Right lobe of liver (tissue), 6 donors: ENCODE measurements at regions of chr6 and their contacts with region 1.

Region 1: DNA sequence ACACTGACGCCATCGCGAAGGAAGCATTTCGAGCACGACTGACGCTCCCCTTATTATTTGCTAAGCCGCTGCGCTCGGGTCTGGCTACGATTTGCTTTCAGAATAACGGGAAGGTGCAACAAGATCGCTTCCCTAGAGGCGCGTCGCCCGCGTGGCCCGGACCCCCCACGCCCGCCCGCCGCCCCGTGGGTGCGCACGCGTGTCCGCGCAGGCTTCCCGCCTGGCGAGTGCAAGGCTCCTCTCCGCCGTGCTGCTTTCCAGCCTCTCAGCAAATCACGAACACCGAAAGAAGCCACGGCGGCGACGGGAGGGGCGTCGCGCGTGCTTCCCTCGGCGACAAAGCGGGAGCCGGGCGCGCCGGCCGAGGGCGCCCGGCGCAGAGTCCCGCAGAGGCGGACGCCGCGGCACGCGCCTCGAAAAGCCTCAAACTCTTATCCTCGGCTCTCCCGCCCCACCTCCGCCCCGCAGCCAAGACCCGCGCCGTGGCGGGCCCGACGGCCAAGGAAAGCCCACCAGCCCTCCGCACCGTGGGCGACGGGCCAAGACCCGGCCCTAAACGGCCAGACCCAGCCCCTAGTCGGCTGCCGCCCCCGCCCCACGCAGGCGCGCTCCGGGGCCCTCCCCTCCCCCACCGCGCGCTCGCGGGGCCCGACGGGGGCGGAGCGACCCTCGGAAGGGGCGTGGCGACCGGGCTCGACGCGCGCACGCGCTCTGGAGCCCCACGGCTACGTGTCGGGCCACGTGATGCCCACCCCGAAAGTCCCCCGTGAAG is 987 bp upstream of the QKI start:
- DNase-seq: peak; percentile 91 to 92 (median 92)
- ATAC-seq: peak; percentile 77 to 89 (median 84)
- H3K4me3 ChIP-seq: peak overlapping the region; percentile 71 to 77 (median 75)
- H3K27ac ChIP-seq: peak overlapping the region; percentile 97 to 100 (median 98)
- H3K4me1 ChIP-seq: peaks cover 0 to 11% (median 5%) of the 10 kb centered on the region in 4 donors
- H3K27me3 ChIP-seq: no peaks in the 10 kb centered on the region
- CTCF ChIP-seq: no peak
- POLR2A ChIP-seq: peak; percentile 88

Region 2: DNA sequence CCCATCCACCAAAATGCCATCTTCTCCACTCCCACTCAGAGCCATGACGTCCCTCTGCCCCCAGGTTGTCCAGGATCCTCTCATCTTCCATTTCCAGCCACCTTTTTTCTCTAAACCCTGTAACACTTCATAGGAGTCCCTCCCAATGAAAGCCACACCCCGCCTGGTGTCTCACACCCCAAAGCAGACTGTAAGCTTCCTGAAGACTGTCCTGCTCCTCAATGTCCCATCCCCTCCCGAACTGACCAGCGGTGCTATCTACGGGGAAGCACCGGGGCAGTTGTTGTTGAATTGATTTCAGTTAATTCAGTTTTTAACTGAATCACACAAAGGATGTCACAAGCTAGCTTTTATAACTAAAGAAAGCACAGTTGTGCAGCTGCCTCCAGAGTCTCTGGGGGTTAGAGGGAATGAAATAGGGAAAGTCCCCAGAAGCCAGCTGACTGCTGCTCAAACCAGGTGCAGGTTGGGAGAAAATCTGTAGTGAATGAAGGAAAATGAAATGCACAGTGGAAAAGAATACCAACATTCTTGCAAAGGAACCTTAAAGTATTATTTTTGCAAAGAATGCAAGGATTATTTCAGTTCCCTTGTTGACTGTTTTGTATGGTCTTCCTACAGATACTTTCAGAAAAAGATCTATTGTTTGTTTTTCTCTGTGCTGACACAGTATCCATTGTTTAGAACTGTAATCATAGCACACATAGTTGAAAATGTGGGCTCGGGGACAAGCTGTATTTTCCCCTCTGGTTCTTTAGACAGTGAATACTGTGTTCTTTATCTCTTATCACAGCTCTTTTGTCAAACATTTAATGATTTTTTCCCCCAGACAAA is 221.6 kb before region 1 on chr6:
- intact Hi-C with region 1: loop called in 1 of 2 experiments (anchors 10 kb)
- DNase-seq: no peak
- ATAC-seq: no peak
- H3K4me3 ChIP-seq: no peak overlapping the region
- H3K27ac ChIP-seq: no peak overlapping the region
- H3K4me1 ChIP-seq: peaks cover 0 to 9% (median 3%) of the 10 kb centered on the region in 4 donors
- H3K27me3 ChIP-seq: no peaks in the 10 kb centered on the region
- CTCF ChIP-seq: no peak
- POLR2A ChIP-seq: no peak

Region 3: GRCh38 chr6:163364641-163365040 is 48.9 kb before region 1 on chr6:
- intact Hi-C with region 1: no loop called
- DNase-seq: no peak
- ATAC-seq: no peak
- H3K4me3 ChIP-seq: no peak overlapping the region
- H3K27ac ChIP-seq: no peak overlapping the region
- H3K4me1 ChIP-seq: no peaks in the 10 kb centered on the region
- H3K27me3 ChIP-seq: no peaks in the 10 kb centered on the region
- CTCF ChIP-seq: no peak
- POLR2A ChIP-seq: no peak